IMR-90 (cell line): ENCODE measurements at regions of chr5 and their contacts with region 1.

Region 1: GRCh38 chr5:128757196-128757959 is 207.9 kb upstream of the SLC27A6 start:
- DNase-seq: no peak
- ATAC-seq: no peak
- H3K4me3 ChIP-seq: no peak overlapping the region
- H3K27ac ChIP-seq: no peak overlapping the region
- H3K4me1 ChIP-seq: no peaks in the 10 kb centered on the region
- H3K27me3 ChIP-seq: peaks cover 1% of the 10 kb centered on the region; the same call in 1 of the 2 replicates
- CTCF ChIP-seq: no peak
- POLR2A ChIP-seq: no peak
- RAD21 ChIP-seq: no peak

Region 2: DNA sequence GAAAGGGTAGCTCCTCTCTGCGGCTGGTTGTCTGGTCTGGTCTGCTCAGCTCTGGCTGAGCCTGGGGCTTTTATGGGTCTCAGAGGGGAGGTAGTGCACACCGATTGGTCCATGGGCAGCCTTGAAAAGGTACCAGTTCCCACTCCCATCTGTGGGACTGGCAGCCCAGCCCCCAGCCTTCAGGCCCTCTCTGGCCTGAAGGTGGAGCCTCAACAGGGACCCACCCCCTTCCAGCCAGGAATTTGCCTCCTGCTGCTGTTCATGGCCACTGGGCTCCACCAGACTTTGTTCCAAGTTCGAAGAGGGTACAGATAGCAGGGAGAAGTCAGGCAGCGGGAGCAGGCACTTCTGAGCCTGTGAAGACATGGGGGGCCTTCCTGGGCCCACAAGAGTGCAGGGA is 42.6 kb after region 1 on chr5:
- CTCF ChIA-PET with region 1: no interaction called
- POLR2A ChIA-PET with region 1: no interaction called
- dilution Hi-C with region 1: no loop called
- in situ Hi-C with region 1: no loop called
- intact Hi-C with region 1: loop called (anchors 5 kb)
- DNase-seq: no peak
- ATAC-seq: no peak
- H3K4me3 ChIP-seq: no peak overlapping the region
- H3K27ac ChIP-seq: no peak overlapping the region
- H3K4me1 ChIP-seq: no peaks in the 10 kb centered on the region
- H3K27me3 ChIP-seq: no peaks in the 10 kb centered on the region
- CTCF ChIP-seq: no peak
- POLR2A ChIP-seq: no peak
- RAD21 ChIP-seq: no peak